Caco-2 (cell line): ENCODE measurements at regions of chr10 and their contacts with region 1.

Region 1: DNA sequence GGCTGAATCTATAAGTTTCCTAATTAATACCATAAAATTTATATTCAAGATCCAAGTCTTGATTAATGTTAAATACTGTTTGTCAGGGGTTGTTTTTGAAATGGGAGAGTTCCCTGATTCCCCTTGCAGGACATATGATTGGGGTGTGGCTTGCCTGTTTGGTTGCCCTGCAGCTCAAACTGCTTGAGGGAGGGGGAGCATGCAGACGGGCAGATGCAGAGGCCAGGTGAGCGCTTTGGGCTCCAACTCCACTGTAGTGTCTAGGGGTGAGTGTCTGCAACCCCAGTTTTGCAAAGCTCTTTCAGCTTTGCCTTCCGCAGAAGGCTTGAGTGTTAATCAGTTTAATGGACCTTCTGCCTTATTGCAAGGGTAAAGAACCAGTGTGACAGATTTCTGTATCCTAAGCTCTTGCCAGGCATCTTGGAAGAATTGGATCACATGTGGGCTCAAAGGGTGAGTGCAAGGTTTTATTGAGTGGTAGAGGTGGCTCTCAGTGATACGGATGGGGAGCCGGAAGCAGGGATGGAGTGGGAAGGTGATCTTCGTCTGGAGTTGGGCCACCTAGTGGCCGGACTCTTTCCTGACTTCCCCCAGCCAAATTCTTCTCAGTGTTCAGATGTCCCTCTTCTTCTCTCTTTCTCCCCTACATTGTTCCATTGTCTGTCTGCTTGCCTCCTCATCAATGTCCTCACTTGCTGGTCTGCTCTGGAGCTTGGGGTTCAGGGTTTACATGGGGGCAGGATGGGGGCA is 479.7 kb downstream of the ATRNL1 start:
- DNase-seq: peak in 1 of 2 experiments; percentile 40
- H3K4me3 ChIP-seq: no peak overlapping the region
- H3K4me3 Mint-ChIP-seq: no peak overlapping the region
- H3K27ac Mint-ChIP-seq: no peak overlapping the region
- H3K4me1 ChIP-seq: no peaks in the 10 kb centered on the region
- H3K4me1 Mint-ChIP-seq: no peaks in the 10 kb centered on the region
- H3K27me3 ChIP-seq: no peaks in the 10 kb centered on the region
- H3K27me3 Mint-ChIP-seq: no peaks in the 10 kb centered on the region
- CTCF ChIP-seq: peak; percentile 50 to 63

Region 2: DNA sequence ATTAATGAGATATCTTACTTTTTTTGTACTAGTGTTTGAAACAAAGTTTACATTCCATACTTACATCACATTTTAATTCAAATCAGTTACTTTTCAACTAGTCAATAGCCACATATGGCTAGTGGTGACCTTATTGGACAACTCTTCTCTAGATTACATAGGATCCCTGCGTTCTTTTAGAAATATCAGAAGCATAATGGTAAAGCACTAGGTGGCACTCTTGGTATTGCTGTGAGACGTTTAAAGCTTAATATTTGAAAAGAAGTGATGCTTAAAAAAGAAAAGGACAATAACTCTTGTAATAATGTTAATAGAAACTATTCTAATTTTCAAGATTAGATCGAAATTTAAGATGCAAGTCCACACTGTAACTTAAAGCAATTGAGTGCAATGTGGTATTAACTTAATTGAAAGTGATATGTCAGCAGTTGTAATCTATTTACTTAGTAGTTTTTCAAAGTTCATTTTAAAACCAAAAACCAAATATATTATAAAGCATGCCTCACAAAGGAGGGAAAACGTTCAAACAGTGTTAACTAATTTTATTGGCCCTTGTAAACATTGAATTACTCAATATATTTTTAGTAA is 140.6 kb before region 1 on chr10:
- CTCF ChIA-PET with region 1: no interaction called
- POLR2A ChIA-PET with region 1: no interaction called
- intact Hi-C with region 1: loop called (anchors 1 kb)
- DNase-seq: peak in 1 of 2 experiments; percentile 18
- H3K4me3 ChIP-seq: no peak overlapping the region
- H3K4me3 Mint-ChIP-seq: no peak overlapping the region
- H3K27ac Mint-ChIP-seq: no peak overlapping the region
- H3K4me1 ChIP-seq: no peaks in the 10 kb centered on the region
- H3K4me1 Mint-ChIP-seq: no peaks in the 10 kb centered on the region
- H3K27me3 ChIP-seq: no peaks in the 10 kb centered on the region
- H3K27me3 Mint-ChIP-seq: peaks cover 3% of the 10 kb centered on the region
- CTCF ChIP-seq: peak; percentile 21 to 43